ENCODE measurements at regions of chr9 and their contacts with region 1.

Region 1: GRCh38 chr9:101533334-101534107 is at the start of gene RNF20:
- H3K4me3 ChIP-seq: peak within 1 kb of the TSS; percentile 85
- H3K27ac ChIP-seq: peak within 1 kb of the TSS; percentile 47
- H3K4me1 ChIP-seq: no peaks in the 10 kb centered on the region
- CTCF ChIP-seq: no peak

Region 2: GRCh38 chr9:101398068-101398929 is 135.2 kb before region 1 on chr9 and contains the starts of genes MRPL50 and ZNF189:
- CTCF ChIA-PET with region 1: interaction called, 3 read pairs
- POLR2A ChIA-PET with region 1: interaction called, 12 read pairs
- H3K4me3 ChIP-seq: peak within 1 kb of the TSS; percentile 84
- H3K27ac ChIP-seq: peak within 1 kb of the TSS; percentile 59; the same call in 1 of the 2 replicates
- H3K4me1 ChIP-seq: no peaks in the 10 kb centered on the region
- CTCF ChIP-seq: no peak

Region 3: GRCh38 chr9:101449140-101449721 is 84.3 kb before region 1 on chr9:
- CTCF ChIA-PET with region 1: interaction called, 19 read pairs
- POLR2A ChIA-PET with region 1: no interaction called
- H3K4me3 ChIP-seq: peak overlapping the region; percentile 55
- H3K27ac ChIP-seq: no peak overlapping the region
- H3K4me1 ChIP-seq: no peaks in the 10 kb centered on the region
- CTCF ChIP-seq: peak; percentile 92

Region 4: DNA sequence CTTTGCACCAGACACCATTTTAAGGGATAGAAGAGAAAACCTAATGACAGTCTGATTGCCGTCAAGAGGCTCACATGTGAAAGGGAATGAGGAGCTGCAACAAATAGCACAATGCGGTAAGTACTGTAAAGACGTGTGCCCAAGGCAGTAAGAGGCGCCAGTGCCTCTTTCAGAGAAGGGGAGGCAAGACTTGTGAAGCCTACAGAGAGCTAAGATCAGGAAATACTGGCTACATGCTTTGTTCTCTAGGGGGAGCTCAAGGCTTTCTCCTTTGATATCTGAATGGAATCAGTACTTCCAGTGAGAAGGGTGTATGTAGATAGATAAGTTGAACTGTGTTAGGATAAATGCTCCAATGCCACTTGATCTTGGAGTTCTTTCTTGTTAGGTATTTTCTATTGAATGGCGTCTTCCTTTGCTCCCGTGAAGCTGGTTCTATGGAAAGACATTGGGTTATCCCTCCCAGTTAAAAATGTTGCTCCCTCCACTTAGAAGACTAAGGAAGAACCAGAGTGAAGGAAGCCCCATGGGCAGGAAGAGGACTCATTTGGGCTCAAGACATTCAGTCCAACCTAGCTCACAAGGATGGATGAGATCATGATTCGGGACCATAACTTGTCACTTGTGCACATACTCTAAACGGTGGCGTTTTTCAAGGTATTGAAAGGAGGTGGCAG is 74.4 kb before region 1 on chr9:
- CTCF ChIA-PET with region 1: interaction called, 396 read pairs
- POLR2A ChIA-PET with region 1: interaction called, 4 read pairs
- H3K4me3 ChIP-seq: no peak overlapping the region
- H3K27ac ChIP-seq: no peak overlapping the region
- H3K4me1 ChIP-seq: no peaks in the 10 kb centered on the region
- CTCF ChIP-seq: peak; percentile 39; the same call in 1 of the 2 replicates

Region 5: DNA sequence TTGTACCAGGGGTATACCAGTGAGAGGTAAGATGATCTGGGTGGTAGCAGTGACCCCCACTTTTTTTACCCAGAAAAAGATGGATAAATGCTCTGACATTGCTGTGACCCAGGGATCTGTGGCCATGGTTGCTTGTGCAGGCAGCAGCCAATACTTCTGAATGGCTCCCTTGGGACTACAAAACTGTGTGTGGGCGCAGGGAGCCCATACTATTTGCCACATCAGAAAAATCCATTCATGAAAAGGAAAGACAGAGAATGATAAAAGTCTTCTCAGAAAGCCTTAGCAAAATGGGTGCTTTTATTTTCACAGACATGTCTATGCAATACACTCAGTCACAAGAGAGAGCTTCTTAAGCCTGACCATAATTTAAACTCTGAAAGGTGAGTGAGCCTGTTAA is 60.6 kb before region 1 on chr9:
- CTCF ChIA-PET with region 1: interaction called, 396 read pairs
- POLR2A ChIA-PET with region 1: no interaction called
- H3K4me3 ChIP-seq: no peak overlapping the region
- H3K27ac ChIP-seq: no peak overlapping the region
- H3K4me1 ChIP-seq: no peaks in the 10 kb centered on the region
- CTCF ChIP-seq: no peak

Region 6: DNA sequence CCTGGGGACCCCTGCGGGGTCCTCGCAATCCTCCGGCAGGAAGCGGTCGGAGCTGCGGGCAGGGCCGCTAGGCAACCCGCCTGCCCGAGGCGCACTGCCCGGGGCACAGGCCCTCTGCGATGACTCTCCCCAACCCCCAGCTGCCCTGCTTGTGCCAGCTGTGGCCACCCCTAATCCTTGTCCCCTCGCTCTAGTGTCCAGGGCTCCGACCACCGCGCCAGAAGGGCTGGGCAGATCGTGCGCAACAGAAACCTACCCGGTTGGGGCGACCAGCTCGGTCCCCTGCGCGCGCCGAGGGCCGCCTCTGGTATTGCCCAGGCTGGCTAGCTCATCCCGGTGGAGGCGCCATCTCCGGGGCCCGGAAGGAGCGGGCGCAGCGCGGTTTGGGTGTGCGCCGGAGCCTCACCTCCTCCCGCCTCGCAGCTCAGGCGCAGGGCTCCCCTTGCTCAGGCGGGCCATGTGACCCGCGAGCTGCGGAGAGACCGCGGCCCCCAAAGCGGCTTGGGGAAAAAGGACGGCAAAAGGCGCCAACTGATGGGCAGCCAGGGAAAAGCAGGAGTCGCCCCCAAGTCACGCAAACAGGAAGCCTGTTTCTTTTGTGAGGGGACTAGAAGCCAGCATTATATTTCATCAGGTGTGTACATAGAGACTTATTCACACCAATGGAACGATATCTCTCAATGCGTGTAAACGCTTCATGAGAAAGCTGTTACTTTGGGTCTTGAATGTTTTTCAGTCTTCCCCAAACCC is 46.7 kb before region 1 on chr9:
- CTCF ChIA-PET with region 1: interaction called, 6 read pairs
- POLR2A ChIA-PET with region 1: interaction called, 17 read pairs
- H3K4me3 ChIP-seq: peak overlapping the region; percentile 53
- H3K27ac ChIP-seq: peak overlapping the region; percentile 72; the same call in 1 of the 2 replicates
- H3K4me1 ChIP-seq: no peaks in the 10 kb centered on the region
- CTCF ChIP-seq: peak; percentile 73

Region 7: GRCh38 chr9:101495810-101496209 is 37.7 kb before region 1 on chr9:
- CTCF ChIA-PET with region 1: interaction called, 14 read pairs
- POLR2A ChIA-PET with region 1: no interaction called
- H3K4me3 ChIP-seq: no peak overlapping the region
- H3K27ac ChIP-seq: no peak overlapping the region
- H3K4me1 ChIP-seq: peaks cover 6% of the 10 kb centered on the region; the same call in 1 of the 2 replicates
- CTCF ChIP-seq: no peak